Left ventricle myocardium superior (tissue), 1 donor: ENCODE measurements at regions of chr11 and their contacts with region 1.

Region 1: DNA sequence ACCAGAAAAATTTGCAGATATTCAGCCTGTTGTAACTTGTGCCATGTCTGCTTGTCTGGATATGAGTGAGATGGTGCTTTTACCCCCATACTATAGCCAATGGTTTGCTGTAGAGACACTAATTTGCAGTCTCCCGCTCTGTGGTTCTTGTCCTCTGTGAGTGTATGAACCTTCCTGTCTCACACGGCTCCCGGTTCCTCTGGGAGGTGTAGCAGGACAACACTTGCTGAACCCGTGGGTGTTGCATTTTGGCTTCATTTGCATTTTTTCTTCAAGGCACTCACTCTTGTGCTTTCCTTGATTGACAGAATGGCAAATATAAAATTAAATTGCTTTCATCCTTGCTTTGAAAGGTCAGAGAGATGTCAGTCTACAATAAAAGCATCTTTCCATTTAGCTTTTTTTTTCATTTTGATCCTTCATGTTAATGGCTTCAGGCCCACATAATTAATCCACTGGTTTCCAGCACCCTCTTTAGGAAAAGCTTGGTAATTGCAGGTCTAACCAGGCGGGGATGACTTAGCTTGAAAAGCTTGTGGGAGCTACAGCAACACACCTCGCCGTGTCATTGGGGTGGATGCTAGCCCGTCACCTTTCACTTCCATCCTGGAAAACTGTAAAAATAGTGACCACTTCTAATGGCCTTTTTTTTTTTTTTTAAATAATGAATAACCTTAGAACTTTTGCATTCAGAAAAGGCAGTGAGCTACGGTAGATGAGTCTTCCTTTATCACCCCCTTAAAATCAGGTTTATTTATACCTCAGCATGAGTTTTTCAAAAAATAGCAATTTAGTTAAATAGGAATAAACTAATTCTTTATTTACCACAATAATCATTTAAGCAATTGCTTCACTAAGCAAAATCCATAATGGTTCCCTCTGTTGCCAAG is 27.4 kb upstream of the ST14 start:
- DNase-seq: no peak
- ATAC-seq: peak; percentile 70

Region 2: DNA sequence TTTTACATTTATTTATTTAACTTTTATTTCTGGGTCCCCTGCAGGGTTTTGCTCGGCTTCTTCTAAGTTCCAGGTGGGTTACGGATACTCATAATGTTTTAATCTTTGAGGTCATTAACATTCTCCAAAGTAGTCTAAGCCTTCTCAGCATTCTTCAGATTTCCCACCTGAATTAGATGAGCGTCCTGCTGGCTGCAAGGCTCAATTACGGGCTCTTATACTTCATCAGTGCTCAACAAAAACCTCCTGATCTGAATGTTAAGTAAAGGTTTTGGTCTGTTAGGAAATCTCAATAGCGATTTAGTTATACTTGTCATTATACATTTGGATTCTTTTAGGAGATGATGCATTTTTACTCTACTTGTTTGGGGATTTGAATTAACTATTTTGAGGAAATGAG is 209.5 kb before region 1 on chr11:
- intact Hi-C with region 1: loop called (anchors 5 kb)
- DNase-seq: no peak
- ATAC-seq: no peak

Region 3: GRCh38 chr11:129992161-129992944 is 139.9 kb before region 1 on chr11:
- intact Hi-C with region 1: loop called (anchors 5 kb)
- DNase-seq: no peak
- ATAC-seq: peak; percentile 74

Region 4: DNA sequence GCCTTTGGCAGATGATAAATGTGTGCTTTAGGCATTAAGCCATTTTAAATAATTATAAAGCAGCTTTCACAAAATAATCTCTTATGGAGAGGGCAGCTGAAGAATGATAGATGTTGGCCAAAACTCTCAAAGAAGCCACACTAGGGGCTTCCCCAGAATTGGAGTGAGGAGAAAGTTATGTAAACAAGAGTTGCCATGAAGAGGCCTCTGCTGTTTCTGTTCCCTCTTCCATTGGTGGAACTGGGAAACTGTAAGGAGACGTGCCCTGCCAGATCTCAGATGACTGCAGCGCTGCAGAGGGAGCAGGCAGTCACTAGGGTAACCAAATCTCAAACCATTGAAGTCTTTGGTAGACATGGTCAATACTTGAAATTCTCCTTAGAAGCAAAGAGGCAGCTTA is 81.9 kb before region 1 on chr11:
- intact Hi-C with region 1: no loop called
- DNase-seq: no peak
- ATAC-seq: peak; percentile 79

Region 5: DNA sequence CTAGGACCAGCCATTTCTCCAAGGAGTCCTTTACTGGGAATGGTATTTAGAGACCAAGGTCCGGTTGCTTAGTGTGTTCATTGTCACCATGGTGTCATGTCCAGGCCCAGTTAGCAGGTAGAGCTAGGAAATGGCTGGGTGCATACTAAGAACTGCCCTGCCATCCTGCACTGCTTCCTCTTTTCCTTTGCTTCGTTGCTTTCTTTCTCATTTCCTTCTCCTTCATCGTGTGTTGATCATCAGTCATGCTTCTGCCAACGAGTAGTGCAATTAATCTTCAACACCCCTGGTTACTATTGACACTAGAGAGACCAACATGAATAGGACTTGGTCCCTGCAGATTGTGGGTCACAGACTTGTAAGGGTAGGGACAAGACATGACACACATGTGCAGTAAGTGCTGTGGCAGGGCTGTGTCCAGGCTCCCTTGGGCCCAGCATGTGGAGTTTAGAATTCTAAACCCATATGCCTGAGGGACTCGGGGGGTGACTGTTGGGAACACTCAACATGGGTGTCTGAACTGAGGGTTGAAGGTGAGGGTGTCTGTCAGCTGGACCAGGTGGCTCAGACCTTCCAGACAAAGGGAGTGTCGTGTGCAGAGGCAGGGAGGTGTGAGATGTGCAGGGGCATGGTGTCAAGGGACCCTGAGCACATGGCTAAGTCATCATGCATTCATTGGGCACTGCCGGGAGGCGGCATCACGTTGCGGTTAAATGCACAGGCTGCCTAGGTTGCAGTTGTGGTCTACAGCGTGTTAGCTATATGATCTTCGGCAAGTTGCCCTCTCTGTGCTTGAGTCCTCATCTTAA is 70.0 kb after region 1 on chr11:
- intact Hi-C with region 1: no loop called
- DNase-seq: no peak
- ATAC-seq: no peak